Breast epithelium (tissue), 4 donors: ENCODE measurements at regions of chr1 and their contacts with region 1.

Region 1: GRCh38 chr1:8031176-8031785 is 5.2 kb upstream of the ERRFI1 start:
- DNase-seq: no peak
- H3K4me3 ChIP-seq: no peak overlapping the region
- H3K27ac ChIP-seq: no peak overlapping the region
- H3K4me1 ChIP-seq: no peaks in the 10 kb centered on the region
- H3K27me3 ChIP-seq: no peaks in the 10 kb centered on the region
- CTCF ChIP-seq: peak in 2 of 3 donors; percentile 69 to 87
- POLR2A ChIP-seq: no peak

Region 2: GRCh38 chr1:8077120-8077573 is 45.9 kb after region 1 on chr1:
- intact Hi-C with region 1: loop called (anchors 1 kb)
- DNase-seq: peak; percentile 47 to 67
- H3K4me3 ChIP-seq: no peak overlapping the region
- H3K27ac ChIP-seq: peak overlapping the region; percentile 88 to 91
- H3K4me1 ChIP-seq: peaks cover 2 to 21% of the 10 kb centered on the region in 2 donors
- H3K27me3 ChIP-seq: no peaks in the 10 kb centered on the region
- CTCF ChIP-seq: peak in 2 of 3 donors; percentile 23
- POLR2A ChIP-seq: no peak

Region 3: GRCh38 chr1:8154621-8155052 is 123.4 kb after region 1 on chr1:
- intact Hi-C with region 1: no loop called
- DNase-seq: peak in 1 of 2 donors; percentile 69
- H3K4me3 ChIP-seq: peak overlapping the region in 1 of 3 donors; percentile 17
- H3K27ac ChIP-seq: peak overlapping the region; percentile 58 to 74
- H3K4me1 ChIP-seq: no peaks in the 10 kb centered on the region
- H3K27me3 ChIP-seq: no peaks in the 10 kb centered on the region
- CTCF ChIP-seq: no peak
- POLR2A ChIP-seq: no peak

Region 4: GRCh38 chr1:8211589-8212442 is 180.5 kb after region 1 on chr1:
- intact Hi-C with region 1: no loop called
- DNase-seq: peak in 1 of 2 donors; percentile 82
- H3K4me3 ChIP-seq: peak overlapping the region in 1 of 3 donors; percentile 10
- H3K27ac ChIP-seq: peak overlapping the region; percentile 76 to 86
- H3K4me1 ChIP-seq: no peaks in the 10 kb centered on the region
- H3K27me3 ChIP-seq: no peaks in the 10 kb centered on the region
- CTCF ChIP-seq: no peak
- POLR2A ChIP-seq: no peak